CD4-positive, alpha-beta memory T cell (primary cell): ENCODE measurements at regions of chr10 and their contacts with region 1.

Region 1: DNA sequence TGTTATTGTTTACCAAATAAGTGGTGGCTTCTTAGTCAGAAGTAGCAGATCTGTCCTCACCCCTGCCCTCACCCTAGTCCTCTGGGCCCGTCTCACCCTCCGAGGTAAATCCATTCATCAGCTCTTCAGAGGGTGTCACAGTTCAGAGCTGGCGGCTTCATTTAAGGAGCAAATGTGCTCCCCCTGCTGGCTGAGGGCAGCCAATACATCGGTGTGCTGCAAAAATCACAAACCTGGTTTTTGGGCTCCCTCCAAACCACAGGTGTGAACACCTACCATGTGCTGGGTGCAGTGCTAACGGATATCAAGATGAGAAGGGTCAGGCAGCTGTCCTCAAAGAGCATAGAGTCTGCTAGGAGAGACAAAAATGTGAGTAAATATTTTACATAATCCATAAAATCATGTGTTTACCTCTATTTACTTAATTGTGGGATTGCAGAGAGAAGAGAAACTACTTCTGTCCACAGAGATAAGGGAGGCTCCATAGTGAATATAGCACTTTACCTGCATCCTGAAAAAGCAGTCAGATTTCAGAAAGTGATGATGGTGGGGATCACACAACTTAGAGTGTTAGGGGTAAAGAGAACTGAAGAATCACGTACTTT is 15.5 kb upstream of the CRTAC1 start:
- DNase-seq: peak; percentile 46 to 54 (median 47)
- H3K4me3 ChIP-seq: no peak overlapping the region
- H3K4me3 Mint-ChIP-seq: no peak overlapping the region
- H3K27ac ChIP-seq: no peak overlapping the region
- H3K27ac Mint-ChIP-seq: no peak overlapping the region
- H3K4me1 ChIP-seq: no peaks in the 10 kb centered on the region
- H3K4me1 Mint-ChIP-seq: peaks cover 0 to 5% (median 3%) of the 10 kb centered on the region in 4 donors
- H3K27me3 ChIP-seq: peaks cover 2% of the 10 kb centered on the region
- H3K27me3 Mint-ChIP-seq: peaks cover 25 to 35% of the 10 kb centered on the region in 2 donors

Region 2: DNA sequence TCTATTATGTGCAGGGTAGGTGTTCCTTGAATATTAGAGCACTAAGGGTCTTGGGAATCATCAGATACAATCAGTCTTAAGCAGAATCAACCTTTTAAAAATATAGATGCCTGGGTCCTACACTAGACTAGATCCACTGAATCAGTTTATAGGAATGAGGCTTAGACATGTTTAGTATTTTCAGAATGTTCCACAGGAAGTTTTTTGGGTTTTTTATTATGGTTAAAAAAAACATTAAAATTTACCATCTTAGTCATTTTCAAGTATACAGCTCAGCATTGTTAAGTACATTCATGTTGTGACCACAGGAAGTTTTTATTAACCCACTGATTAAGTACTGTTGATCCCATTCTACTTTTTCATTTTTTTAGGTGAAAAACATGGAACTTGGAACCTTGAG is 1078.0 kb before region 1 on chr10:
- CTCF ChIA-PET with region 1: no interaction called
- POLR2A ChIA-PET with region 1: no interaction called
- intact Hi-C with region 1: no loop called
- DNase-seq: no peak
- H3K4me3 ChIP-seq: no peak overlapping the region
- H3K4me3 Mint-ChIP-seq: no peak overlapping the region
- H3K27ac ChIP-seq: no peak overlapping the region
- H3K27ac Mint-ChIP-seq: no peak overlapping the region
- H3K4me1 ChIP-seq: no peaks in the 10 kb centered on the region
- H3K4me1 Mint-ChIP-seq: peaks cover 0 to 3% (median under 1%) of the 10 kb centered on the region in 4 donors
- H3K27me3 ChIP-seq: no peaks in the 10 kb centered on the region
- H3K27me3 Mint-ChIP-seq: no peaks in the 10 kb centered on the region

Region 3: DNA sequence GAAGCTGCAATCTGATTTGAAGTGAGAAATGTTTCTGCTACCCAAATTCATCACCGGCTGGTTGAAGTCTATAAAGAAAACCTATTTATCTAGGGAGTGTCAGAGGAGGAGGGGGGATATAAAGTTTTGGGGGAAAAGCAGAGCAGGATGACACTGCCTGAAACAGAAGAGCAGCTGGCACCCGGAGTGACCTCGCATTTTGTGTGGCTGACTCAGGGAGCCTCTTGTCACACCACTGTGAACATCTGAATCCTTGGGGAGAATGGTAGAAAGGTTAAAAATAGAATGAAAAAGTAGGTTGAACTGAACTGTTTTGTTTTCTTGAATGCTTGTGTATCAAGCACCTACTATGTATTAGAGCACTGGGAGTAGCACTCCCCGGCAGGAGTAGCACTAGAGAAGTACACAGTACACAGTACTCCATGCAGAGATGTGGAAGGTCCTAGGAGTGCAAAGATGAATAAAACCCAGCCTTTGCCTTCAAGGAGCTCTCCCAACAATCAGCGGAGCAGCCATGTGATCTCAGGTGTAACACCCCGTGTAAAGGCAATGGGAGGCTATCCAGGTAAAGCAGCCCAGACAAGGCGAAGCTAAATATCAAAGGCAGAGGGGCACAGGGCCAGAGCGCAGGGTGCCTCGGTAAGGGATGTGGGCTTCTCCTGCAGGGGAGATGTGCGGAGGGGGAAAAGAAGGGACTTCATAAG is 29.0 kb before region 1 on chr10:
- CTCF ChIA-PET with region 1: interaction called, 10 read pairs
- POLR2A ChIA-PET with region 1: no interaction called
- intact Hi-C with region 1: no loop called
- DNase-seq: no peak
- H3K4me3 ChIP-seq: no peak overlapping the region
- H3K4me3 Mint-ChIP-seq: no peak overlapping the region
- H3K27ac ChIP-seq: no peak overlapping the region
- H3K27ac Mint-ChIP-seq: no peak overlapping the region
- H3K4me1 ChIP-seq: no peaks in the 10 kb centered on the region
- H3K4me1 Mint-ChIP-seq: no peaks in the 10 kb centered on the region
- H3K27me3 ChIP-seq: no peaks in the 10 kb centered on the region
- H3K27me3 Mint-ChIP-seq: peaks cover 10 to 22% of the 10 kb centered on the region in 2 donors

Region 4: DNA sequence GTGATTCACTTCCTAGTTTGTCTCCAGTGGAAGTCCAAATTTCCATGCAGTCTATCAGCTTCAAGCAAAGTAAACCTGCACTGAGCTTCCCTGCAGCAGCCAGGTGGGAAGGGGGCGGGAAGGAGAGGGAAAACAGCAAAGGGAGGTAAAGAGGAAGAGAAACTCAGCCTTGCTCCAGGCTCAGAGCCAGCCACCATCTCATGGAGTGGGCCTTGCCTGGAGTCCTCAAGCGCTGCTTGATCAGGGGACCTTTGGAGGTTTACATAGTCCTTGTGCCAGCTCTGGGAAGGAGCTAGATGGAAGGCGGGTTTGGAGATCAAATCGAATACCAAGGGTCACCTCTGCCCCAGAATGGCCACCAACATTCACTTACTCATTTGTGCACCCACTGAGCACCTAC is 22.9 kb before region 1 on chr10:
- CTCF ChIA-PET with region 1: interaction called, 34 read pairs
- POLR2A ChIA-PET with region 1: no interaction called
- intact Hi-C with region 1: no loop called
- DNase-seq: no peak
- H3K4me3 ChIP-seq: no peak overlapping the region
- H3K4me3 Mint-ChIP-seq: no peak overlapping the region
- H3K27ac ChIP-seq: no peak overlapping the region
- H3K27ac Mint-ChIP-seq: no peak overlapping the region
- H3K4me1 ChIP-seq: no peaks in the 10 kb centered on the region
- H3K4me1 Mint-ChIP-seq: peaks cover 0 to 1% (median 0%) of the 10 kb centered on the region in 4 donors
- H3K27me3 ChIP-seq: peaks cover 3% of the 10 kb centered on the region
- H3K27me3 Mint-ChIP-seq: peaks cover 16 to 28% of the 10 kb centered on the region in 2 donors

Region 5: DNA sequence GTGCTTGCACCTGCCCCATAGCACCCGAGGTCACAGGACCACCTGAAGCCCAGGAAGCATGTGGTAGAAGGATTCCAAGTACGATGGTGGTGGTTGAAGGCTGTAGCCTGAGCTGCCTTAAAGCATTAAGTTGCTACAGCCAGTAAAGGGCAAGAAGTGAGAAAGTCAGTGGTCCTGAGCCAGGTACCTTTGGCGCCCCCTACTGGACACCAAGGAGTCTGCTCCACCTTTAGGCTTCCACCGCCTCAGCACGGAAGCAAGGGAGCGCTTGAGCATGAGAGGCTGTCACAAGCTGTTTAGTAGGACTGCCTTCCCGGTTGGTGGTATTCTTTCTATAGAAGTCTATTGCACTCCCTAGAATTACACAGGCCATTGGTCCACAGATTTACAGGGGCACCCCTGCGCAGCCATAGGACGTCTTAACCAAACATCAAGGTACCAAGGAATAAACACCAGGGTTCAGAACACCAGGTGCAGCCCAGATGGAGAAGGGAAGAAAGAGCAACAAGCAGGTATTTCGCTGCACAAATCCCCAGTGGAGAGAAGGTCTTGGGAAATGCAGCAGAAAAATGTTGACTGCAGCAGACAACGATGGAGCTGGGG is 17.6 kb before region 1 on chr10:
- CTCF ChIA-PET with region 1: interaction called, 34 read pairs
- POLR2A ChIA-PET with region 1: no interaction called
- intact Hi-C with region 1: no loop called
- DNase-seq: peak; percentile 34 to 48 (median 45)
- H3K4me3 ChIP-seq: no peak overlapping the region
- H3K4me3 Mint-ChIP-seq: peak overlapping the region in 4 of 8 donors; percentile 4 to 73 (median 15)
- H3K27ac ChIP-seq: no peak overlapping the region
- H3K27ac Mint-ChIP-seq: no peak overlapping the region
- H3K4me1 ChIP-seq: no peaks in the 10 kb centered on the region
- H3K4me1 Mint-ChIP-seq: peaks cover 2 to 20% (median 7%) of the 10 kb centered on the region in 4 donors
- H3K27me3 ChIP-seq: peaks cover 13% of the 10 kb centered on the region
- H3K27me3 Mint-ChIP-seq: peaks cover 43 to 48% of the 10 kb centered on the region in 2 donors